ENCODE measurements at regions of chr5 and their contacts with region 1.

Region 1: DNA sequence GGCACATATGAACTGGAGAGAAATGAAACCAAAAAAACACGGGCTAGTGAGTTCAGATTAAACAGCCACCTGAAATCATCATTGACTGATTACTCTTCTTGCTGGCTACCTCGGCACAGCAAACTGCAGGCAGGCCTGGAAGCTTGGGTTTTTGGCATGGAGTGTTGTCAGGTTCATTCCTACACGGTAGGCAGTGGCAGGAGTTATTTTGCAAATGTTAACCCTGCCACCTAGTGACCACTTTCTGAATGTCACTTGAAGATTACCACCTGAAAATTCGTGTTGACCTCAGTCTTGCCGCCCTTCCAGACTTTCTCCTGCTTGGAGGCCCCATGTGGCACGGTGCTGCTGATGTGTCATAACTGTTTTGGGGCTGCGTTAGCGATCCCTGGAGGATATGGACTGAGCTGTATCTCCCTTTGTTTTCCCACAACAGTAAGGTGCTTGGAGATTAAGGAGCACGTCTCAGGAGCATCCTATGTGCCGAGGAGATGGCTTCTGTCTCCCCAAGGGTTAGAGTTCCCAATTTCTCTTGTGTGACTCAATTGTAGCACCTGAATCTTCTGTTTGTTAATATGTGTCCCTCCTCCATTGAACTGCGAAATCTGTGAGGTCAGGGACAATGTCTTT is 12.7 kb upstream of the CD180 start:
- DNase-seq: peak; percentile 92
- H3K4me3 Mint-ChIP-seq: no peak overlapping the region
- H3K27ac Mint-ChIP-seq: peak overlapping the region; percentile 74
- H3K4me1 Mint-ChIP-seq: peaks cover 62% of the 10 kb centered on the region
- H3K27me3 Mint-ChIP-seq: no peaks in the 10 kb centered on the region

Region 2: GRCh38 chr5:66306105-66306843 is 903.0 kb before region 1 on chr5:
- intact Hi-C with region 1: loop called (anchors 5 kb)
- DNase-seq: peak; percentile 78
- H3K4me3 Mint-ChIP-seq: no peak overlapping the region
- H3K27ac Mint-ChIP-seq: no peak overlapping the region
- H3K4me1 Mint-ChIP-seq: peaks cover 4% of the 10 kb centered on the region
- H3K27me3 Mint-ChIP-seq: peaks cover 15% of the 10 kb centered on the region

Region 3: GRCh38 chr5:66828548-66829357 is 380.5 kb before region 1 on chr5:
- intact Hi-C with region 1: loop called (anchors 2 kb)
- DNase-seq: peak; percentile 92
- H3K4me3 Mint-ChIP-seq: peak overlapping the region; percentile 93
- H3K27ac Mint-ChIP-seq: peak overlapping the region; percentile 93
- H3K4me1 Mint-ChIP-seq: peaks cover 56% of the 10 kb centered on the region
- H3K27me3 Mint-ChIP-seq: no peaks in the 10 kb centered on the region

Region 4: GRCh38 chr5:66864331-66864840 is 344.9 kb before region 1 on chr5:
- intact Hi-C with region 1: no loop called
- DNase-seq: peak; percentile 79
- H3K4me3 Mint-ChIP-seq: no peak overlapping the region
- H3K27ac Mint-ChIP-seq: peak overlapping the region; percentile 3
- H3K4me1 Mint-ChIP-seq: peaks cover 29% of the 10 kb centered on the region
- H3K27me3 Mint-ChIP-seq: peaks cover 6% of the 10 kb centered on the region

Region 5: DNA sequence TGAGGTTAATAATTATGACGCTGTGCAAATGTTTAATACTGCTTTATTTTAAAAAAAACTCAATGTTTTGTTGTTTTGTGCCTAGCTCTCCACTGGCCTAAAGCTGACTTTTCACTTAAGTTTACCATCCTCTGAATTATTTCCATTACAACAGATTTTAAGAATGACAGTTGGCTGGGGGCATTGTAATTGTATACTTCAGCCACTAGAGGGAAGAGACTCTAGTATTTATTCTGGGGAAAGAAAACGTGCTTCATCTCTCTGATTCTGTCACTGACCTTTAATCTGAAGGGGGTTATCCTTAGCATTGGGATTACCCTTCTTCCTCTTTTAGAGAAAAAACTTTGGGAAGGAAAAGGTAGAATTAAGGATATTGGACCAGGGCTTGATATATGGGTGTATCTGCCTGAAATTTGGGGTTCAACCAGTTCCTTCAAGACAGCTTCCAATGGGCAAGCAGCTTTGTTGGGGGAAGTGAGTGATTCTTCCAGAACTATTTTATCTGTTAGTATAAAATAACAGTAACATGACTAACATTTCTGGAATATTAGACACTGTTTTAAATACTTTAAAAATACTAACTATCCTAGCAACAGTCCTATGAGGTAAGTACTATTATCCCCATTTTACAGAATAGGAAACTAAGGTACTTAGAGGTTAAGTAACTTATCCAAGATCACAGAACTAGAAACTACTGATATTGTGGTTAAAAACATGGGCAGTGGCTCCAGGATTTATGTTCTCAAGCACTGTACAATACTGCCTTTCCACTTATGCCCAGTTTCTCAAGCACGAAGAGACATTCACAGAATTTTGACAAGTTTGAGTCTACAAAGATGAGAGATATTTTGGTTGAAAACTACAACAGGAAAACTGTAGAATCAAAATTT is 221.1 kb before region 1 on chr5:
- intact Hi-C with region 1: loop called (anchors 1 kb)
- DNase-seq: peak; percentile 58
- H3K4me3 Mint-ChIP-seq: no peak overlapping the region
- H3K27ac Mint-ChIP-seq: no peak overlapping the region
- H3K4me1 Mint-ChIP-seq: peaks cover 4% of the 10 kb centered on the region
- H3K27me3 Mint-ChIP-seq: no peaks in the 10 kb centered on the region

Region 6: GRCh38 chr5:67038817-67039603 is 170.2 kb before region 1 on chr5:
- intact Hi-C with region 1: loop called (anchors 10 kb)
- DNase-seq: no peak
- H3K4me3 Mint-ChIP-seq: no peak overlapping the region
- H3K27ac Mint-ChIP-seq: peak overlapping the region; percentile 54
- H3K4me1 Mint-ChIP-seq: peaks cover 30% of the 10 kb centered on the region
- H3K27me3 Mint-ChIP-seq: no peaks in the 10 kb centered on the region

Region 7: GRCh38 chr5:67165526-67166459 is 43.5 kb before region 1 on chr5:
- intact Hi-C with region 1: loop called (anchors 1 kb)
- DNase-seq: peak; percentile 96
- H3K4me3 Mint-ChIP-seq: peak overlapping the region; percentile 89
- H3K27ac Mint-ChIP-seq: peak overlapping the region; percentile 96
- H3K4me1 Mint-ChIP-seq: peaks cover 65% of the 10 kb centered on the region
- H3K27me3 Mint-ChIP-seq: no peaks in the 10 kb centered on the region

Region 8: DNA sequence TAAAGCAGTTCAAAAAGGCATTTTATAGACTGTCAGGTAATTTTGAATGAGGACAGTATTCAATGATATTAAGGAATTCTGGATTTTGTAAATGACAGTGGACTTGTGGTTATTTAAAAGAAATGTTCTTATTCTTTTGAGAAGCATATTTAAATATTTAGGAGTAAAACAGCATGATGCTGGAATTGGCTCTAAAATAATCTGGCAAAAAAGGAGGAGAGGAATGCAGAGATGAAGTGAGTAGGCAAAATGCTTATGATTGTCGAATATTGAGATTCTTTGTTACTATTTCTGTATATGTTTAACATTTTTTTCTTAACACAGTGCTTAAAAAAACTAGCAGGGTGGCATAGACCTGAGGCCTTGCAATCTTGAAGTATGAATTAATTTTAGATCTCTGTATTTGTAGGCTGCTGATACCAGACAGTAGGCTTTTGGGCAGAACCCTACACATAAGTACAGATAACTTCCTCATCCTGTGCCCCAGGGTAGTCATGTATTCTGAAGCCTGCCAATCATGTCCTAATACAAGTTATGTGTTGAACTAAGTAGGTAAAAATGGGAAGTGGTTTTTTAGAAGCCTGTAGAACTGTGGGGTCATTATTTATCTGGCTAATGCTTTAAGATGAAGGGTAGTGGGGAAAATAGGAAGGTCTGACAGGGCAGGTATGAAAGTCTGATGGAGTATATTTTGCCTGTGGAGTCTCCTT is 22.1 kb before region 1 on chr5:
- intact Hi-C with region 1: no loop called
- DNase-seq: no peak
- H3K4me3 Mint-ChIP-seq: peak overlapping the region; percentile 4
- H3K27ac Mint-ChIP-seq: peak overlapping the region; percentile 51
- H3K4me1 Mint-ChIP-seq: peaks cover 56% of the 10 kb centered on the region
- H3K27me3 Mint-ChIP-seq: no peaks in the 10 kb centered on the region

Region 9: GRCh38 chr5:67233728-67234127 is 24.5 kb after region 1 on chr5:
- intact Hi-C with region 1: no loop called
- DNase-seq: no peak
- H3K4me3 Mint-ChIP-seq: no peak overlapping the region
- H3K27ac Mint-ChIP-seq: no peak overlapping the region
- H3K4me1 Mint-ChIP-seq: peaks cover 4% of the 10 kb centered on the region
- H3K27me3 Mint-ChIP-seq: peaks cover 19% of the 10 kb centered on the region

Region 10: GRCh38 chr5:68424799-68425537 is 1215.7 kb after region 1 on chr5:
- intact Hi-C with region 1: loop called (anchors 10 kb)
- DNase-seq: peak; percentile 82
- H3K4me3 Mint-ChIP-seq: peak overlapping the region; percentile 27
- H3K27ac Mint-ChIP-seq: peak overlapping the region; percentile 73
- H3K4me1 Mint-ChIP-seq: peaks cover 46% of the 10 kb centered on the region
- H3K27me3 Mint-ChIP-seq: peaks cover 15% of the 10 kb centered on the region